Vagina (tissue), 2 donors: ENCODE measurements at regions of chr7 and their contacts with region 1.

Region 1: DNA sequence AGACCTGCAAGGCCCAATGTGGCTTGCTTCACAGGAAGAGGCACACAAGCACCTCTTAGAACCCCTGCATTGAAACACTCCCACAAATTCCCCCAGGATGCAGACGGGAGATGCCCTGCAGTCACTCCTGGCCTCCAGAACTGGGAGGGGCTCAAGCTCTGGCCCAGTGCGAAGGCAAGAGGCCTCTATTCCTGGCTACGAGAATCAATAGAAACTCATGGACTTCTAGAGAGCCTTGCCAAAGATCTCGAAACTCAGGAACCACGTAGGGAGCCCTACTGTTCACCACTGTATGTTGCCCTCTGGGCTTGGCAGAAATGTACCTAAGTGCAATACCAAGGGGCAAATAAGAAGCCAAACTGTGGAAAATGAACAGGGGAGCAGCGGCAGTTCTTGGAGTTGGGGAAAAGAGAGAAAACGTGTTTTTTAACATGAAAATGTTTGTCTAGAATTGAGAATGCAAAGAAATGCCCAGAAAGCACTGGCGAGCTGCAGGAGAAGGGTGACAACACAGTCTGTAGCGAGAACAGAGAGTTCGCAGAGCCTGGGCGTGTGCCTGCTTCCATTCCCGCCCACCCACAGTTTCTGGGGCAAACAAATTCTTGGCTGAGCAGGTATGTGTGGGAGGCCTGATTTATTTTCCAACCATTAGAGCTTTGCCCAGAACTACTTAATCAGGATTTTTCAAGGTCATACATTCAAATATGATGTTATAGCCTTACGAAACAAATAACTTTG is 260.5 kb upstream of the KLF14 start:
- DNase-seq: peak in 1 of 2 donors; percentile 81
- H3K4me3 ChIP-seq: no peak overlapping the region
- H3K27ac ChIP-seq: peak overlapping the region; percentile 78
- H3K4me1 ChIP-seq: peaks cover 100% of the 10 kb centered on the region
- H3K27me3 ChIP-seq: no peaks in the 10 kb centered on the region
- CTCF ChIP-seq: no peak
- POLR2A ChIP-seq: no peak

Region 2: DNA sequence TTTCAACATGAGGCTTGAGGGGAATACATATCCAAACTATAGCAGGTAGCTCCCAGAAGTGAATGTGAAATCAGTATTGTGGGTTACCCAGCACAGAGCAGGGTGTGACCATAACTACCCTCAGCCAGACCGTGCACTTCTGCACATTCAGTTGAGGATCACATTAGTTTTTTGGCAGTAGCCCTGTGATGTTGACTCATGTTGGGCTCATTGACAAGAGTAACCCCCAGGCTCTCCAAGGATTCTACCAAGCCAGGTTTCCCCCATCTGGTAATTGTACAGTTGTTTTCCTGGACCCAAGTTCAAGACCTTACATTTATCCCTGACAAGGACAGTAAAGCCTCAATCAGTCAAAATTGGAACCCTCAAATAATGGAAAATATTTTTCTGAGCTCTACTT is 713.3 kb before region 1 on chr7:
- intact Hi-C with region 1: loop called (anchors 5 kb)
- DNase-seq: no peak
- H3K4me3 ChIP-seq: no peak overlapping the region
- H3K27ac ChIP-seq: no peak overlapping the region
- H3K4me1 ChIP-seq: peaks cover 5% of the 10 kb centered on the region
- H3K27me3 ChIP-seq: no peaks in the 10 kb centered on the region
- CTCF ChIP-seq: no peak
- POLR2A ChIP-seq: no peak

Region 3: DNA sequence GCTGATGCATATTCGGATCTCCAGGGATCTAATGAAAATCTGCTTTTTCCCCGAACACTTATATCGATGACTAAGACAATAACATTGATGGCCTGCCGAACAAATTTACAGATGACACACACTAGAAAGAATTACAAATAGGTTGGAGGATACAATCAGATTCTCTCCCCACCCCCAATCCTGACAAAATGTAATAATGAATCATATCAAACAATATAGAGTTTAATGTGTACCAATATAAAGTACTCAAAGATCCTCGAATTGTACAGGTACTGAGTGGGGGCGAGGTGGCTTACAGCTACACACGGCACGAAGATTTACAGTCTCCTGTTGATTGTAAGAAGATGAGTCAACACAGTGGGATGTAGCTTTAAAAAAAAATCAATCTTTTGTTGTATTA is 150.5 kb after region 1 on chr7:
- intact Hi-C with region 1: no loop called
- DNase-seq: no peak
- H3K4me3 ChIP-seq: no peak overlapping the region
- H3K27ac ChIP-seq: no peak overlapping the region
- H3K4me1 ChIP-seq: no peaks in the 10 kb centered on the region
- H3K27me3 ChIP-seq: no peaks in the 10 kb centered on the region
- CTCF ChIP-seq: no peak
- POLR2A ChIP-seq: no peak